Pancreas (tissue), 10 donors: ENCODE measurements at regions of chr22 and their contacts with region 1.

Region 1: DNA sequence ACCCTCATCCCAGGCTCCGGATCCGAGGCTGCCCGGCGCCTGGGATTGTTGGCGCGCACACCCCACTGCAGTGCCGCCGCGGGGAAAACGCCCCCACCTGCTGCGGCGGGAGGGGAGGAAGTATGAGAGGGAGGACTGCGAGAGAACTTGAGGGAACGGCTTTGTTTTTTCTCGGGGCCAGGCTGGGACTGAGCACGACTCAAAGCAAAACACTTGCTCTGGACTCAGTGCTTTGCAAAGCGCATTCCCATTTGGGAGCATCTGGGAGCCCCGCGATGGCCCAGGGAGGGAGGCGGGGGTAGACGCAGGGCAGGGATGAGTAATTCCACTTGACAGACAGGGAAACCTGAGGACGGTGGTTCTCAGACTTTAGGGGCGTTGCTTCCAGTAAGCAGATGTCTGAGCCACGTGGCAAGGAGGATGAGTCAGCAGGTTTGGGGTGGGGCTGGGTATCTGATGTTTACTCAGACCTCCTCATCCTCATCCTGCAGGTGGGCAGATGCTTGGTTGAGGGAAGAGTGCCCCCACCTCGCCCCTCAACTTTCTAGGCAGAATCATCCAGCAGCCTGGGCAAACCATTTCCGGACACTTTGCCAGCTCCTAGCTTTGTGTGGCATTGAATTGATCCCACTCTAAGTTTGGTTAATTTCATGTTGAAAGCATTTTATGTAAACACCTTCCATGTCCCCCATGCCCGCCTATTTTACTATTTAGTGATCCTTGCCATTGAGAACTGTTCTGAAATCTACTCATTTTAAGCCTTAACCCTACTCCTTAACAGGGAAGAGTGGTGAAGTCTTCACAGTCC is 1.5 kb downstream of the MIAT start:
- DNase-seq: no peak
- ATAC-seq: peak in 3 of 4 donors; percentile 55 to 72 (median 70)
- H3K4me3 ChIP-seq: peak overlapping the region in 1 of 4 donors; percentile 33
- H3K27ac ChIP-seq: no peak overlapping the region
- H3K4me1 ChIP-seq: peaks cover 0 to 9% (median 0%) of the 10 kb centered on the region in 3 donors
- H3K27me3 ChIP-seq: peaks cover 0 to 7% (median 2%) of the 10 kb centered on the region in 4 donors
- CTCF ChIP-seq: no peak

Region 2: DNA sequence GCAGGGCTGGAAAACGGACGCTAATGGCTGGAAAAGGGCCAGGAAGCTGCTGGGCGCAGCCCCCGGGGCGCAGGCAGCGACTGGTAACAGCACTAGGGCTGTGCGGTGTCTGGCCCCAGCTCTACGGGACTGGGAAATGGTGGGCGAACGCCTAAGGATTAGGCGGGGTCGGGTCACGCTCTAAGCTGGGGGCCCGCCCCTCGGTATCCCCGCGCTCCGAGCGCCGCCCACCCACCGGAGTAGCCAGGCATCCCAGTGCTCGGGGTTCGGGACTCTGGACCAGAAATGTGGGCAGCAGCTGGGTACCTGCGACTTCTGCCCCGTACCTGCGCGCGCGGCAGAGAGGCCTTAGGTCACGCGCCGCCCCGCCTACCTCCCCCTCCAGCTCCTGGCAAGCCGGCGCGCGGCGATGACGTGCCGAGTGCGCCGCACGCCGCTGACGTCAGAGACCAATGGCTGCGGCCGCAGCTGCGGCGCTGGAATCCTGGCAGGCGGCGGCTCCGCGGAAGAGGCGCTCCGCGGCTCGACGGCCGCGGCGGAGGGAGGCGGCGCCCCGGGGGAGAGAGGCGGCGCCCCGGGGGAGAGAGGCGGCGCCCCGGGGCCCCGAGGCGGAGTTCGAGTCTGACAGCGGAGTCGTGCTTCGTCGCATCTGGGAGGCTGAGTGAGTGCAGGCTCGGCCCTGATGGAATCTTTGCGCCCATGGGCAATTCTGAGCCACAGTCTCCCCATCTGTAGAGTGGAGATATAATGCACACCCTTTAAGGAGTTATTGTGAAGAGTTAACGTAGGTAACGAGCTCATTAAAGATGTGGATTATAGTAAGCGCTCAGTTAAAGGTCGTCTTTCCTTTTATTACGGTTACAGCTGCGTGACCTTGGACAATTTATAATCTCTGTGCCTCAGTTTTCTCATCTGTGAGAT is 175.2 kb before region 1 on chr22 and contains the starts of genes HPS4 and SRRD:
- intact Hi-C with region 1: loop called in 1 of 3 experiments (anchors 10 kb)
- DNase-seq: peak; percentile 89 to 99 (median 94)
- ATAC-seq: peak; percentile 90 to 98 (median 94)
- H3K4me3 ChIP-seq: peak within 1 kb of the TSS; percentile 80 to 99 (median 90)
- H3K27ac ChIP-seq: peak within 1 kb of the TSS; percentile 86 to 97 (median 94)
- H3K4me1 ChIP-seq: peaks cover 15 to 42% (median 17%) of the 10 kb centered on the region in 3 donors
- H3K27me3 ChIP-seq: no peaks in the 10 kb centered on the region
- CTCF ChIP-seq: no peak
- total RNA-seq, gene HPS4: 14.4 to 24.7 (median 19.6) TPM
- total RNA-seq, gene SRRD: 9.5 to 13.6 (median 10.8) TPM

Region 3: DNA sequence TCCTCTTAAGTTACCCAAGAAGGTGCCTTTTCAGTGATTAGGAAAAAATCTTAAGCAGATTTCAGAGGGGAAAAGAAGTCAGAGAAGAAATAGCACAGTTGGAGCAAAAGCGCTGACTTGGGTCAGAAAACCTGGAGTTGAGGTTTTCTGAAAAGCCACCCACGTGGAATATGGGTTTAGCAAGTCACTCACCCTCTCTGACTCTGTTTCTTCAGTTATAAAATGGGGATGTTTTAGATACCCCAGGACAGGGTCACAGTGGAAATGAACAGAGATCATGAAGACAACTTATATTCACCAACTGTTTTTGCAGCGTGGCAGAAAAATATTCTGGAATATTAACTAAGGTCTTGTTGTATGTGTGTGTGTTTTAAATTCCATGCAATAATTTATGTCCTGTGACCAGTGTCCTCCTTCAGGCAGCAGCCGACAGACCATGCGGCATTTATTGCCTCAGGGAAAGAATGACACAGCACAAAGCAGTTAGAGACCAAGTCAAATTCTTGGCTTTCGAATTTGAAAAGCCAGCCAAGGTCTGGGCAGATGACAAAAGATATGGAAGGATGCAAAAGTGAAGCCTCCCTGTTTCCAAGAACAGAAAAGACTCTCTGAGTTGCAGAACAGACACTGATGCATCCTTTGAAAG is 118.4 kb after region 1 on chr22:
- intact Hi-C with region 1: no loop called
- DNase-seq: no peak
- ATAC-seq: no peak
- H3K4me3 ChIP-seq: no peak overlapping the region
- H3K27ac ChIP-seq: no peak overlapping the region
- H3K4me1 ChIP-seq: no peaks in the 10 kb centered on the region
- H3K27me3 ChIP-seq: no peaks in the 10 kb centered on the region
- CTCF ChIP-seq: no peak

Region 4: DNA sequence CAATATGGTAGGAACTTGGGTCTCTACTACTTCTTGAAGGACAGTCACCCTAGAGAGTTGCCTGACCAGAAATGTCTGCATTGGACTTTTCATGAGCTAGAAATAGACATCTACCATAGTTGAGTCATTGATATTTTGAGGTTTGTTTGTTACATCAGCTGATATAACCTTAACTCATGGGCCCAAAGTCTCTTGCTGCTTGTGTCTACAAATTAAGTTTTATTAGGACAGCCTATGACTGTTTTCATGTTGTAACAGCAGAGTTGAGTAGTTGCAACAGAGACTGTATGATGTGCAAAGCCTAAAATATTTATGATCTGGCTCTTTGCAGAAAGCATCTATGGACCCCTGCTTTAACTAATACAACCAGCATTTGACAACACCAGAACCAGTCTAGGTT is 153.9 kb after region 1 on chr22:
- intact Hi-C with region 1: no loop called
- DNase-seq: no peak
- ATAC-seq: no peak
- H3K4me3 ChIP-seq: no peak overlapping the region
- H3K27ac ChIP-seq: no peak overlapping the region
- H3K4me1 ChIP-seq: no peaks in the 10 kb centered on the region
- H3K27me3 ChIP-seq: no peaks in the 10 kb centered on the region
- CTCF ChIP-seq: no peak